AG04449 (cell line): ENCODE measurements at regions of chr6 and their contacts with region 1.

Region 1: DNA sequence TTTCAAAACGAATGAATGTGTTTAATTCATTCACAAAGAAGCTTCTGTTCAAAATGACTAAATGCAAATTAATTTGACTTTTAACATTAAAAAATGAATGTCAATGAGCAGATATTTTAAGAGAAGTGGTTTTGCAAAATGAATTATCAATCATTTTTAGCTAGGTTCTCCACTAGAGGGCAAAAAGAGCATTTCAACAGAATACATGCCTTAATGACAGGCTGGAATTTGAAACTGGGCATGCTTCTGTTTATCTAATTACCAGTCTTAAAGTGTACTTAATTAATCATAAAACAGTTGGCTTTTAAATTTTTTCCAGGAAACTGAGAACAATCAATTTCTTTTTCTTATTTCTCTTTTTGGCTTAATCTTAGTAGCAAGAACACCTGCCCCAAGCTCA is 63.8 kb upstream of the TINAG start:
- DNase-seq: no peak
- H3K4me3 ChIP-seq: no peak overlapping the region
- CTCF ChIP-seq: peak; percentile 32

Region 2: GRCh38 chr6:54255886-54256285 is 11.5 kb after region 1 on chr6:
- CTCF ChIA-PET with region 1: interaction called, 34 read pairs
- POLR2A ChIA-PET with region 1: no interaction called
- DNase-seq: no peak
- H3K4me3 ChIP-seq: no peak overlapping the region
- CTCF ChIP-seq: no peak

Region 3: DNA sequence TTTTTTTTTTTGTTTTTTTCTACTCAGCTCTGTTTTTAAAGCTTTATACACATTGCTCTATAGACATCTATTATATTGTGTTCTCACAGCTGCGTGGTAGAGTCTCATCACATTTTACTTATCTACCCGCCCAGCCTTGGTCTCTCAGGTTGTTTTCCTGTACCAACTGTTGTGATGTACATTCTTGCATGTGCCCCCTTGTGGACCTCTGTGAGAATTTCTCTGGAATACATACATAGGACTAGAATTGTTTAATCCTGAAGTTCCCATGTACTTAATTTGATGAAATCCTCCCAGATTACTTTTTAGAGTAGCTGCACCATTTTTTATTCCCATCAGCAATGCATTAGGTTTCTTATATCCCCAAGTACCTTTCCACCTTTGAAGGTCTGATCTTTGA is 23.4 kb after region 1 on chr6:
- CTCF ChIA-PET with region 1: interaction called, 18 read pairs
- POLR2A ChIA-PET with region 1: no interaction called
- DNase-seq: no peak
- H3K4me3 ChIP-seq: no peak overlapping the region
- CTCF ChIP-seq: peak; percentile 52

Region 4: DNA sequence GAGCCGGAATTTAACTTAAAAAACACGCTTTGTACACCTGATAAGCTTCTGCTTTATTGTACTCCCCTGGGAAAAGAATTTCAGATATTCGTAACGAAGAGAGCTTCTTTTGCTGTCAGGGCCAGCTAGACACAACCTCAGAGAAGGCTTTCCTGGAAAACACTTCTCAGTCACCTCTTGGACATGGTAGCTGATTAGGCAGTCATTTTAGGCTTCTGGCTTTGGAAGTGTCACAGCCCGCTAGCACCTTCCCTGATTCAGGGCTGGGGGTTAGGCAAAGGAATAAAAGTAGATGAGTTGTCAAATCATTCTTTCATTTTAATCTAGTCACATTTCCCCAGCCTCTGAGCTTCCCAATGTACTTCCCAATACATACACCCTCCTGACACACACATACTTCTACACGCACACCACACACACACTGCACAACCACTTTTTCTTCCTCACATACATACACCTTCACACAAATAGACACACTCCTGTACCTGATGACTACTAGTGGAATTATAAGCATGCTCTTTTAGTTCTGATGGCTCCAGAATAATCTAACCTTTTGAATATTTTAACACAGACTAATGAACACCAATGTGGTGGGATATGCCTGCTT is 28.9 kb after region 1 on chr6:
- CTCF ChIA-PET with region 1: interaction called, 18 read pairs
- POLR2A ChIA-PET with region 1: no interaction called
- DNase-seq: no peak
- H3K4me3 ChIP-seq: no peak overlapping the region
- CTCF ChIP-seq: no peak

Region 5: DNA sequence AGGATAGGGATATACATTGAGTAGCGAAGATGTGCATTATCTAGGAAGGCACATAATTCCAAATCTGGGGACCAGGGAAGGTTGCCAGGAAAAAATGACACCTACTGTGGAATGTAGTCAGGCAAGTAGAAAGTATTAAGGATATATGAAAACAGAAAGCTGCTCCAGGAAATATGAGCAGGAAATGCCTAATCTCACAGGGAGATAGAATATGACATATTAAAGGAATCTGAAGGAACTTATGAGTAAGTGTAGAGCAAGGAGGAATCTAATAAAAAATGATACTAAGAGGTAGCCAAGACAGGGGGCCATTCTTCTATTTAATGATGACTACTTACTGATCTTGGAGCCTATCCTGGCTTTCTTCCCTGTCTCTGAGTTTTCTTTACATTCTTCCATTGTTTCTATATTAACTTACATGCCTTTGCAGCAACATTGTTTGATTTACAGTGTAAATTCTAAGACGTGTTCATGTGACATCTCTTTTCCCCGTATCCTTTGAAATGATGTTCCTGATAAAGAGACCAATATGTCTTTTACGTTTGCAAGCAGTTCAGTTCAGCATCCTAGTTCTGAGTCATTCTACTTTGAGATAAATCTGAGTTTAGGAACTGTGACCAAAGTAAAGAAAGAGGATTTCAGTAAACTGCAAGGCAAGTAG is 122.4 kb after region 1 on chr6:
- CTCF ChIA-PET with region 1: no interaction called
- POLR2A ChIA-PET with region 1: no interaction called
- DNase-seq: no peak
- H3K4me3 ChIP-seq: no peak overlapping the region
- CTCF ChIP-seq: no peak

Region 6: DNA sequence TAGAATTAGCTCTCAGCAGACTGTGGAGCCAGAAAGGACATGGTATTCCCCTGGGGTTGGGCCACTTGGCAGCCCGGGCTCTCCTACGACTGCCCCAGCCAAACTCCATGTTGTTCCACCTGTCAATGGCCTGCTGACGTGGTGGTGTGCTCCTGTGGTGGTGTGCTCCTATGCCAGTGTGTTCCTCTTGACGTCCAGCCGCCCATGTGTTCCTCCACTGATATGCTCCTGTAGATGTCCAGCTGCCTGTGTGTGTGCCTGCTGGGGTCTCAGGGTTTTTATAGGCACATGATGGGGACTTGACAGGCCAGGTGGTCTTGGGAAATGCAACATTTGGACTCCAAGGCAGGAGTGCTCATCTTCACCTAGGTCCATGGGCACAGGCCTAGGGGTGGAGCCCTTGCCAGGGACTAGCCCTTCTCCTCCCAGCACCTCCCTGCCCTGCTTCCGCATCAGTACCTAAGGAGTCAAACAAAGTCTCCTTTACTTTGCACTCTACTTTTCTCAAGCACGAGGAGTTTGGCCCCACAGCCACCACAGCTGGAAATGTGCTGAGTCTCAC is 197.3 kb after region 1 on chr6:
- CTCF ChIA-PET with region 1: no interaction called
- POLR2A ChIA-PET with region 1: no interaction called
- DNase-seq: no peak
- H3K4me3 ChIP-seq: no peak overlapping the region
- CTCF ChIP-seq: no peak